SK-N-SH (cell line): ENCODE measurements at regions of chr4 and their contacts with region 1.

Region 1: GRCh38 chr4:38034986-38035882 is 75.0 kb downstream of the PTTG2 start:
- DNase-seq: peak; percentile 59
- H3K4me3 ChIP-seq: no peak overlapping the region; a peak in 1 of 4 replicates
- H3K27ac ChIP-seq: no peak overlapping the region
- H3K4me1 ChIP-seq: no peaks in the 10 kb centered on the region
- H3K27me3 ChIP-seq: no peaks in the 10 kb centered on the region
- CTCF ChIP-seq: peak; percentile 79
- EP300 ChIP-seq: no peak
- RAD21 ChIP-seq: peak; percentile 78

Region 2: GRCh38 chr4:37794056-37794455 is 241.2 kb before region 1 on chr4:
- CTCF ChIA-PET with region 1: interaction called, 11 read pairs
- POLR2A ChIA-PET with region 1: no interaction called
- DNase-seq: no peak
- H3K4me3 ChIP-seq: no peak overlapping the region
- H3K27ac ChIP-seq: no peak overlapping the region
- H3K4me1 ChIP-seq: no peaks in the 10 kb centered on the region
- H3K27me3 ChIP-seq: peaks cover 5% of the 10 kb centered on the region; the same call in 1 of the 2 replicates
- CTCF ChIP-seq: no peak
- EP300 ChIP-seq: no peak
- RAD21 ChIP-seq: no peak

Region 3: DNA sequence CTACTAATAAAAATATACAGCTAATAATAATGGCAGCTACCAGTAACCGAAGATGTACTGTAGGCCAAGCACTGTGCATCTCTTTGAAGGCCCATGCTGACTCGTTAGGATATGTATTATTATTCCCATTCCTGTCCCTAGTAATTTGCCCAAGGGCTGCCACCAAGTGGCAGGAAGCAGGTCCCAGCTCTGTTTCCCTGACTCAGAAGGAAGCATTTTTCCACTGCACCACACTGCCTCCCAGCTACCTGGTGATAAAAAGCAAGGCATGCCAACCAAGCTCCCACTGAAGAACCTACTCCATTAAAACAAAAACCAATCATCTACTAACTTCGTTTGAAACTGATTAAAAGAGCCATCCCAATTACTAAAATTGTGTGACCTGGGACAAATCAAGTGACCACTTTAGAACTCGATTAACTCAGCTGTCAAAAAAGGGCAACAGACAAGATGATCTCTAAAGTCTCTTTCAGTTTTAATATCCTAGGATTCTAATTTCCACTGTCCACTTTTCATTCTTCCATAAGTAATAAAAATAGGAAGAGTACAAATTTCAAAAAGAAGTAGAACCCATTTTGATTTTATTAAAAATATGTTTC is 233.1 kb before region 1 on chr4:
- CTCF ChIA-PET with region 1: interaction called, 27 read pairs
- POLR2A ChIA-PET with region 1: interaction called, 3 read pairs
- DNase-seq: peak; percentile 63
- H3K4me3 ChIP-seq: no peak overlapping the region; a peak in 1 of 4 replicates
- H3K27ac ChIP-seq: no peak overlapping the region
- H3K4me1 ChIP-seq: no peaks in the 10 kb centered on the region
- H3K27me3 ChIP-seq: no peaks in the 10 kb centered on the region
- CTCF ChIP-seq: peak; percentile 70
- EP300 ChIP-seq: peak in 1 of 2 experiments; percentile 21; a peak in 1 of 4 replicates
- RAD21 ChIP-seq: peak; percentile 91

Region 4: GRCh38 chr4:37812710-37813109 is 222.5 kb before region 1 on chr4:
- CTCF ChIA-PET with region 1: interaction called, 12 read pairs
- POLR2A ChIA-PET with region 1: no interaction called
- DNase-seq: no peak
- H3K4me3 ChIP-seq: no peak overlapping the region
- H3K27ac ChIP-seq: peak overlapping the region in 1 of 2 experiments; percentile 27; a peak in 1 of 4 replicates
- H3K4me1 ChIP-seq: no peaks in the 10 kb centered on the region
- H3K27me3 ChIP-seq: no peaks in the 10 kb centered on the region
- CTCF ChIP-seq: no peak
- EP300 ChIP-seq: no peak
- RAD21 ChIP-seq: no peak

Region 5: DNA sequence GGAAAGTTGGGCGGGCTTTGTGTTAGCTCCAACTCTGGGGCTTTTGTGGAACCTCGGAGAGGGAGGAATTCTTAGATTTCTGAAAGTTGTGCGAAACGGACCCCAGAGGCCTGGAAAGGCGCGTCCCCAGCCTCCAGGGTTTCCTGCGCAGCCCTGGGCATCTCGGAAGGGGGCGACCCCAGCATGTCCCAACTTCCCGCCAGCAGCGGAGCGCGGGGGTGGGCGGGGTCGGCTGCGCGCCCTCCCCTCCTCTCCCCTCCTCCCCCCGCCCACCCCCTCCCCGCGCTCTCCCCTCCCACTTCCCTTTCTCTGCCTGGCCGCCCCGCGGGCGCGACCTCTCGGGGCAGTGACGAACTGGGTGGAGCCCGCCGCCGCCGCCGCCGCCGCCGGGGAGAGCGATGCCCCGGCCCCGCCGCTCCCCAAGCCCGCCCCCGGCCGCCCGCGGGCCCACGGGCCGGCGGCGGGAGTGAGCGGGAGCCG is 58.2 kb before region 1 on chr4:
- CTCF ChIA-PET with region 1: interaction called, 10 read pairs
- POLR2A ChIA-PET with region 1: no interaction called
- DNase-seq: peak; percentile 93
- H3K4me3 ChIP-seq: peak overlapping the region; percentile 75 to 77; a peak in 3 of 4 replicates
- H3K27ac ChIP-seq: no peak overlapping the region
- H3K4me1 ChIP-seq: peaks cover 2 to 8% of the 10 kb centered on the region in 2 experiments; a peak in 2 of 4 replicates
- H3K27me3 ChIP-seq: no peaks in the 10 kb centered on the region
- CTCF ChIP-seq: no peak
- EP300 ChIP-seq: no peak
- RAD21 ChIP-seq: peak; percentile 18; the same call in 1 of the 2 replicates

Region 6: GRCh38 chr4:38013461-38014366 is 21.5 kb before region 1 on chr4:
- CTCF ChIA-PET with region 1: no interaction called
- POLR2A ChIA-PET with region 1: no interaction called
- DNase-seq: no peak
- H3K4me3 ChIP-seq: no peak overlapping the region
- H3K27ac ChIP-seq: no peak overlapping the region
- H3K4me1 ChIP-seq: peaks cover 0 to 9% of the 10 kb centered on the region in 2 experiments; a peak in 1 of 4 replicates
- H3K27me3 ChIP-seq: no peaks in the 10 kb centered on the region
- CTCF ChIP-seq: no peak
- EP300 ChIP-seq: no peak
- RAD21 ChIP-seq: no peak